HEK293 (cell line): ENCODE measurements at regions of chr12 and their contacts with region 1.

Region 1: DNA sequence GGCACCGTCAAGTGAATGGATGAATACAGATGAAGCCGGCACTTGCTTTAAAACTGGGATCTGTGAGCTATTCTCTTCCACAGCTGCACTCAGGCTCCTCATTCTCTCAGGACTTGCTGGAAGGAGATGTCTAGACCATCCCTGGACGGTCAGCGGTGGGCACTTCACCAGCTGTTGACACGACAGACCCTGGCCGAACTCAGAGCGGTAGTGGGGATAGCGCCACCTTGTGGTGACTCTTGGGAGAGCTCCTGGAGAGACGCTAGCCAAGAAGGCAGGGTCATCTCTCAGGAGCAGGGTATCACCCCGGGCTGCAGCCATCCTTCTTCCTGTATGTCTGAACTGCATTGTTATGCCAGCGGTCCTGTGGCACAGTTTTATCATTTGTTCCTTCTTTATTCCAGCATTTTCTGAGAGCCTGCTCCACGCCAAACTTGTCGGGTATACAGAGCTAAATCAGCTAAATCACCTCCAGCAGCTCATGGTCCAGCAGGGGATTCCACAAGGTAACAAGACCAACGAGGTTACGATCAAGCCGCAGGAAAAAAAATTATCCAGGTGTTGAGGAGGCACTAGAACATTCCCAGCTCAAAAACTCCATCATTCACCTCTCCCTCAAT is 10.0 kb downstream of the WNT1 start:
- H3K4me3 ChIP-seq: no peak overlapping the region
- H3K27ac ChIP-seq: no peak overlapping the region
- H3K4me1 ChIP-seq: no peaks in the 10 kb centered on the region; the same call in 1 of the 2 replicates
- CTCF ChIP-seq: peak; percentile 82

Region 2: GRCh38 chr12:48890657-48891418 is 97.3 kb before region 1 on chr12:
- CTCF ChIA-PET with region 1: interaction called, 10 read pairs
- POLR2A ChIA-PET with region 1: no interaction called
- H3K4me3 ChIP-seq: peak overlapping the region; percentile 20
- H3K27ac ChIP-seq: no peak overlapping the region
- H3K4me1 ChIP-seq: no peaks in the 10 kb centered on the region
- CTCF ChIP-seq: peak; percentile 95

Region 3: GRCh38 chr12:48924617-48925303 is 63.4 kb before region 1 on chr12:
- CTCF ChIA-PET with region 1: interaction called, 20 read pairs
- POLR2A ChIA-PET with region 1: interaction called, 5 read pairs
- H3K4me3 ChIP-seq: peak overlapping the region; percentile 38
- H3K27ac ChIP-seq: peak overlapping the region; percentile 49; the same call in 1 of the 2 replicates
- H3K4me1 ChIP-seq: no peaks in the 10 kb centered on the region
- CTCF ChIP-seq: no peak

Region 4: DNA sequence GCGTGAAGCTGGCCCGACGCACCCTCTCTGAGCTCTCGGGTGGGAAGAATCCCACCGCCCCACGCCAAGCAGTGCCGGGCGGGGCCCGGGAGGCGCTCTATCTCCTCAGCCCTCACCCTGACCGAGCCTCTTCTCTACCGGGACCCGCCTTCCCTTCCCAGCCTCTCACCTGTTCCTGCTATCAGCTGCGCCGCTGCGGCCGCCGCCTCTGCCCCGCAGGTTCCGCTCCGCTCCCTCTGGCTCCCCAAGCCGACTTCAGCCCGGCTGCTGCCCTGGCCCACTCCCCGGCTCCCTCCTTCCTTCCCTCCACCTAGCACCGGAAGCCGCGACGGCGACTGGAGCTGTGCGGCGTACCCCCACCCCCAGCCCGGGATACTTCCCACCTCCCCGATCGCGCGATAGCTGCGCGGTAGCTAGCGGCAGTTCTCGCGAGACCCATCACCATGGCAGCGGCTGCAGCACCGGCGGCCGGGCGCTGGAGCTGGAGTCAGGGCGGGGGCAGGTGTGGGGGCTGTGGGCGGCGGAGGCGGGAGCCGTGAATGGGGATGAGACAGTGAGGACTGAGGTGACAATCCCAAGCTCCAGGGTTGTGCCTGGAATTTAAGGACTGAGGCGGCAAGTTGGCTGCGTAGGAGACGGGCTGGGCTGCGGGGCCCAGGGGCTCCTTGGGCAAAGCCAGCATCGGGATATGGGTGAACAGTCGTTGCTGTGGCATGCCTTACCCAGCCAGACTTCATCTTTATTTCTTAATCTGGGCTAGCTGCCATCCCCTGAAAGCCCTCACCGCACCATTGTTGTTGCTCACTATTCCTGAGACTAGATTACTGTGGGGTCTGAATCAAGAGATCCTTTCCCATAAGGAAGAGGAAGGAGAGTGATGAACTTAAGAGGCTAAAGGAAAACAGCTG is 30.7 kb before region 1 on chr12 and contains the start of gene ARF3:
- CTCF ChIA-PET with region 1: interaction called, 79 read pairs
- POLR2A ChIA-PET with region 1: interaction called, 5 read pairs
- H3K4me3 ChIP-seq: peak within 1 kb of the TSS; percentile 81
- H3K27ac ChIP-seq: peak within 1 kb of the TSS; percentile 90
- H3K4me1 ChIP-seq: no peaks in the 10 kb centered on the region
- CTCF ChIP-seq: no peak; the same call in none of the 2 replicates

Region 5: GRCh38 chr12:48977315-48978281 is 10.5 kb before region 1 on chr12:
- CTCF ChIA-PET with region 1: interaction called, 66 read pairs
- POLR2A ChIA-PET with region 1: no interaction called
- H3K4me3 ChIP-seq: no peak overlapping the region
- H3K27ac ChIP-seq: no peak overlapping the region
- H3K4me1 ChIP-seq: no peaks in the 10 kb centered on the region
- CTCF ChIP-seq: peak; percentile 81

Region 6: GRCh38 chr12:49079793-49080192 is 91.7 kb after region 1 on chr12:
- CTCF ChIA-PET with region 1: no interaction called
- POLR2A ChIA-PET with region 1: no interaction called
- H3K4me3 ChIP-seq: no peak overlapping the region
- H3K27ac ChIP-seq: no peak overlapping the region
- H3K4me1 ChIP-seq: no peaks in the 10 kb centered on the region
- CTCF ChIP-seq: no peak